CD8-positive, alpha-beta T cell (primary cell): ENCODE measurements at regions of chr2 and their contacts with region 1.

Region 1: GRCh38 chr2:199916980-199917379 is 5.9 kb downstream of the C2orf69 start:
- DNase-seq: no peak
- ATAC-seq: no peak
- H3K4me3 ChIP-seq: no peak overlapping the region
- H3K4me3 Mint-ChIP-seq: no peak overlapping the region
- H3K27ac ChIP-seq: no peak overlapping the region
- H3K27ac Mint-ChIP-seq: no peak overlapping the region
- H3K4me1 ChIP-seq: peaks cover 21% of the 10 kb centered on the region
- H3K4me1 Mint-ChIP-seq: peaks cover 40% of the 10 kb centered on the region
- H3K27me3 ChIP-seq: no peaks in the 10 kb centered on the region
- H3K27me3 Mint-ChIP-seq: no peaks in the 10 kb centered on the region
- CTCF ChIP-seq: no peak

Region 2: DNA sequence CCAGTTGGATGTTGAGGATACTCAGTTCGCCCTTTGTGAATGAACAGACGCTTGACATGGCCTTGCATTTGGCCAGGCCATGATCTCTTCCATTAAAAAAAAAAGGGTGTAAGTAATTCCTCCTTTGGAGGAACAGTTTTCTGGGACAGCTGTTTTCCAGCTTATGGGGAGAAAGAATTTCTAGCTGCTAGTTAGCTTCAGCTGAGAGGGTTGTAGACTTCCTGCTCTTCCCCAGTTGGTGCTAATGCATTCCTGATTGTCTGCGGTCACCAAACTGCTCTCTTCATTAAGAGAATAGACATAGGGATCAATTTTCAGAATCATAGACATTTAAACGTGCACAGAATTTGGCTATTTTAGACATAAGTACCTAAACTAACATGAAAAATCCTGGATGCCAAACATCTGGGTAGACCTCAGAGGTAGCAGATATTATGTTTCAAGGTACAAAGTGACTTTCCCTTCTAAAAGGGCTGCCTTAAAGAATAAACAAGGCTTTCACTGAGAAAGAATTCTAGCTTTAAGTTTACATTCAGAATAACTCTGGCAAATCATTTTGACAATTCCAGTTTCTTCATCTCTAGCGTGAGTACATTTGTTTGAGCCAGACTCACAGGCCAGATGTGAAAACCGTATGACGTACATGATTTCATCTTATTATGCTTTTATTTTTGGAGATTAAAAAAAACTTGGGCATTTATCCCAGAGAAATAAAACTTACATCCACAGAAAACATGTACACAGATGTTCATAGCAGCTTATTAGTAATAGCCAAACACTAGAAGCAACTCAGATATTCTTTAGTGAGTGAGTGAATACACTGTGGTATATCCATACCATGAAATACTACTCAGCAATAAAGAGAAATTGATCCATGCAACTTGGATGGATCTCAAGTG is 109.6 kb after region 1 on chr2:
- CTCF ChIA-PET with region 1: no interaction called
- POLR2A ChIA-PET with region 1: no interaction called
- intact Hi-C with region 1: no loop called
- DNase-seq: no peak
- ATAC-seq: no peak
- H3K4me3 ChIP-seq: no peak overlapping the region
- H3K4me3 Mint-ChIP-seq: no peak overlapping the region
- H3K27ac ChIP-seq: no peak overlapping the region
- H3K27ac Mint-ChIP-seq: no peak overlapping the region
- H3K4me1 ChIP-seq: no peaks in the 10 kb centered on the region
- H3K4me1 Mint-ChIP-seq: no peaks in the 10 kb centered on the region
- H3K27me3 ChIP-seq: no peaks in the 10 kb centered on the region
- H3K27me3 Mint-ChIP-seq: no peaks in the 10 kb centered on the region
- CTCF ChIP-seq: no peak

Region 3: DNA sequence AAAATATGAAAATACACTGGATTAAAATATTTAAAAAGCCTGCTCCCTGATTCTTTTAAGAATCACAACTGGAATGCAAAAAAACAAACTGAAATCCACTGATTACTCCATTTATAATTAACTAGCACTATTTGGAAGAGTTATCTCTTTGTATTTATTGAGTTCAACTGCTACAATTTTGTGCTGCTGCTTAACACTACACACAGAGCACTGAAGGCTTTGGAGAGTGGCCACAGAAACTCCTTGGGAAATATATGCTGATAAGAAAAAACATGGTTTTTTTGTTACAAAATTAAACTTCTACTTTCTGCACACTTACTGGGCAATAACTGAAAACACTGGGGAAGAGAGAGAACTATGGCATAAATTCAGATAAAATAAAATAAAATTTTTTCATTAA is 874.9 kb after region 1 on chr2:
- CTCF ChIA-PET with region 1: no interaction called
- POLR2A ChIA-PET with region 1: no interaction called
- intact Hi-C with region 1: loop called in 1 of 2 experiments (anchors 5 kb)
- DNase-seq: no peak
- ATAC-seq: no peak
- H3K4me3 ChIP-seq: no peak overlapping the region
- H3K4me3 Mint-ChIP-seq: no peak overlapping the region
- H3K27ac ChIP-seq: no peak overlapping the region
- H3K27ac Mint-ChIP-seq: no peak overlapping the region
- H3K4me1 ChIP-seq: no peaks in the 10 kb centered on the region
- H3K4me1 Mint-ChIP-seq: no peaks in the 10 kb centered on the region
- H3K27me3 ChIP-seq: no peaks in the 10 kb centered on the region
- H3K27me3 Mint-ChIP-seq: peaks cover 8% of the 10 kb centered on the region
- CTCF ChIP-seq: no peak